ENCODE measurements at regions of chr3 and their contacts with region 1.

Region 1: DNA sequence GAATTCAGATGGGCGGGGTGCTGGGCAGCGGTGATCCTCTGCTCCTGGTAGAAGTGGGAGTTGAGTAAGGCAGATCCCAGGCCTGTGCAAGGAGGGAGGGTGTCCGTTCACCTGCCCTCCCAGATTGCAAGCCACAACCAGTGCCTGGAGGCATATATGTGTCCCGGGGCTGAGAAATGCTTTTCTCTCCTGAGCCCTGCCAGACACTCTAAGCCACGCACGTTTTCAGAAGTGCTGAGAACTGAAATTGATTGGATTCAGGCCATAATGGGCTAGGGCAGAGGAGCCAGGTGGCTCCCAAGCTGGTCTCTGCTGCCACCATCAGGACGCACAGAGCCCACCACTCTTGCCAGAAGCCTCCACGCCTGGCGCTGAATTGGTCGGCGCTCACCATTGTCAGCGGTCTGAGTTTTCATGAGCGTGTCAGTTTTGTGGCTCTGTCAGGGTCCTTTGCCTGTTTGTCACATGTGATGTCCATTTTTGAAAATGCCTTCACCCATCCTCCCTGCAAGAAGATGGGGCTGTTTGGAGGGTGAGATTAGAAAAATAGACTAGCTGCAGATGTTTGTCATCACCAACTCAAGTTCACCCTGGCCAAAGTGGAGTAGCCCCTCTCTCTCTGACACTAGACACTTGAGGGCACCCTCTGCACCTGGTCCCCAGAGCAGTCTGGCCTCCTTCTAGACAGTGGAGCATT is 15.4 kb upstream of the BFSP2 start:
- DNase-seq: peak in 1 of 2 experiments; percentile 55
- H3K4me3 ChIP-seq: no peak overlapping the region
- H3K27ac ChIP-seq: no peak overlapping the region
- H3K4me1 ChIP-seq: peaks cover 8% of the 10 kb centered on the region
- H3K27me3 ChIP-seq: peaks cover 62% of the 10 kb centered on the region
- CTCF ChIP-seq: peak; percentile 60

Region 2: GRCh38 chr3:132253262-132253878 is 1131.1 kb before region 1 on chr3:
- CTCF ChIA-PET with region 1: no interaction called
- POLR2A ChIA-PET with region 1: no interaction called
- intact Hi-C with region 1: loop called (anchors 10 kb)
- DNase-seq: peak; percentile 16 to 56
- H3K4me3 ChIP-seq: no peak overlapping the region
- H3K27ac ChIP-seq: no peak overlapping the region
- H3K4me1 ChIP-seq: peaks cover 34% of the 10 kb centered on the region
- H3K27me3 ChIP-seq: no peaks in the 10 kb centered on the region
- CTCF ChIP-seq: peak; percentile 83

Region 3: DNA sequence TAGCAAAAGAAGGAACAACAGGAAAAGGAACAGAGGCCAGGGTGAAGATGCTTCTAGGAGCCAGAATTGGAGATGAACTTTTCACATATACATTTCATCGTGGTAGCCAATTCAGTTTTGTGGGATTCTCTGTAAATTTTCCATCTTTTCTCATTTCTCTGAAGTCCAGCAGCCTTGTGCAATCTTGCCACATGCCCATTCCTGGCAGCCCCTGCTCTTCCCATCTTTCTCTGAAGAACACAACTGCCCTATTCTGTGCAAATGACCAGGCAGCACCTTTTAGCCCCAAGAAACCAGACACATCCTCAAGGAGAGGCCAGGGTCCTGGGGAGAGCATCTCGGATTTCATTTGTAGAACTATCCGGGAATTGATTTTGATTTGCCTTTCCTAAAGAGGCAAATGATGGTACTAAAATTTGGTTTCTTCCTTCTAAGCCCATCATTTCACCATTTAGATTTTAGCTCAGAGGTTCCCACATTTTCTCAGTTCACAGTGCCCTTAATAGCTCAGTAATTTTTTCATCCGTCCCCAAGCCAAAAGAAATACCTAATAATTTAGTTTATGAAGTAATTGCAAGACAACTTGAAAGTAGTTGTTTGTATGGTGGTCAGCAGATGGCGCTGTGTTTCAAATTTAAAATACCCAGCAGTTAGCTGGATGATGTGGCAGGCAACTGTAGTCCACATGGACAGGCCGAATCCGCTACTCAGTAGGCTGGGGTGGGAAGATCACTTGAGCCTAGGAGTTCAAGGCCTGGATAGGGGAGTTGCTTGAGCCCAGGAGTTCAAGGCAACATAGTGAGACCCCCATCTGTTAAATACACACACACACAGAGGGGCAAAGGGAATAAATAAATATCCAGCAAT is 848.7 kb before region 1 on chr3:
- CTCF ChIA-PET with region 1: no interaction called
- POLR2A ChIA-PET with region 1: no interaction called
- intact Hi-C with region 1: loop called (anchors 5 kb)
- DNase-seq: peak; percentile 36 to 46
- H3K4me3 ChIP-seq: no peak overlapping the region
- H3K27ac ChIP-seq: no peak overlapping the region
- H3K4me1 ChIP-seq: no peaks in the 10 kb centered on the region
- H3K27me3 ChIP-seq: no peaks in the 10 kb centered on the region
- CTCF ChIP-seq: peak; percentile 84

Region 4: DNA sequence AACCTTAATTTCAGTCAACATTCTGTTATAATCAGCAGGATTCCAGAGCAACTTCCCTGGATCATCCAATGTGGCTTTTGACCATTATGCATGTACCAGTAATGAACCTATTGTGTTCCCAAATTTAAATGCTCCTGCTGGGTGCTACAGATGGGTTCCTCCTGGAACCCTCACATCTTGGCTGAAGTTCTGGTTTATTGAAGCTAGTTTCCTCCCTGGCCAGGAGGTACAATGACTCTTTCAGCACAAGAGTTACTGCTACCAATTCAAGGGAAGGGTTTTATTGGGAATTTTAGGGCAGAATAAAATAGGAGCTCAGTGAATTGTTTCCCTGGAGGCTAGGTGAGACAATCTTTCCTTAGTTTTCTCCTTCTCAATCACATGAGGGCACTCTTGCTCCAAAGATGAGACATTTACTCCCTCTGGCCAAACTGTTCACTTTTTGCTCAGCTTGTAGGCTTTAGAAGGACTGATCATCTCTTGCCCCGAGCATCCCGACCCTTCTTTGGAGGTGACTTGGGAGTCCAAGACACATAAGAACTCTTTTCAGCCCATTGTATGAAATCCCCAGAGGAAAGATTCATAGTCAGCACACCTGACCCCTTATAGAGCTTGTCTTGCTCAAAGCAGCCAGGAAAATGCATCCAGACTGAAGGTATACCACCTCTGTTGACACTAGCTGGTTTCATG is 653.4 kb before region 1 on chr3:
- CTCF ChIA-PET with region 1: no interaction called
- POLR2A ChIA-PET with region 1: no interaction called
- intact Hi-C with region 1: loop called (anchors 2 kb)
- DNase-seq: peak in 1 of 2 experiments; percentile 25
- H3K4me3 ChIP-seq: no peak overlapping the region
- H3K27ac ChIP-seq: no peak overlapping the region
- H3K4me1 ChIP-seq: no peaks in the 10 kb centered on the region
- H3K27me3 ChIP-seq: no peaks in the 10 kb centered on the region
- CTCF ChIP-seq: peak; percentile 51; the same call in 1 of the 2 replicates

Region 5: GRCh38 chr3:132972333-132972732 is 412.1 kb before region 1 on chr3:
- CTCF ChIA-PET with region 1: no interaction called
- POLR2A ChIA-PET with region 1: no interaction called
- intact Hi-C with region 1: no loop called
- DNase-seq: no peak
- H3K4me3 ChIP-seq: no peak overlapping the region
- H3K27ac ChIP-seq: no peak overlapping the region
- H3K4me1 ChIP-seq: no peaks in the 10 kb centered on the region
- H3K27me3 ChIP-seq: no peaks in the 10 kb centered on the region
- CTCF ChIP-seq: no peak

Region 6: DNA sequence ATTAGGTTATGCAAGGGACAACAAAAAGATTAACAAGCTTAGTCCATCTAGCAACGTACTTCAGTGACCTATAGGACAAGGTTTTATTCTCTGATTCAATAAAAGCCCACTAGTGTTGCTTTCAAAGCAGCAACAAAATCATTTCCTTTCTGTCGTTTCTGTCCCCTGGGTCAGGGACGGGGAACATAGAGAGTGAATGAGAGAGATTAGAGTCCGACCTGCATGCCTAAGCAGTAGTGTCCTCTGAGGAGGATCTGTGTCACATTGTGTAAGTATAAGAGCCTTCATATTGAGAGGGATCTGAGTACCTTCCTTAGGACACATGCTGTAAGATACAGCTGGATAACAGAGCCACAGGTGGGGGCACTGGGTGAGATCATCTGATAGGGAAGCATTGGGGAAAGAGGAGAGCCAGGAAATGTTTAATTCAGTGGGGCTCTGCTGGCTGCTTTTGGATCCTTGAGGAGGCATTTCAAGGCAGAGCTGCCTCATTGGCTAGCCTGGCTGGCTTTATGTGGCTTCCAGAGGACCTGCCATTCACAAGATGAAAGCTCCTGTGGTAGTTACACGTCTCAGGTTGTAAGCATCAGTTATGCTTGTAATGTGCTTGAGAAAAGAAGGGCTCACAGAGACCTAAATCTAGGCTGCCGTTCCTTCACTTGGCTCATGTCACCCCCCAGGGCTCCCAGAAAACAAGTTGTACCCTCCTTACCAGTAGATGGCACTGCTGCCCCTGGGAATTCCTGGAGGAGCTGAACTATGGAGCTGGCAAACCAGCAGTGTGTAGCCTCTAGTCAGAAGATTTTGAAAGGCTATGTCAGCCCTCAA is 343.6 kb before region 1 on chr3:
- CTCF ChIA-PET with region 1: interaction called, 3 read pairs
- POLR2A ChIA-PET with region 1: no interaction called
- intact Hi-C with region 1: loop called (anchors 1 kb)
- DNase-seq: peak; percentile 36 to 61
- H3K4me3 ChIP-seq: no peak overlapping the region
- H3K27ac ChIP-seq: no peak overlapping the region
- H3K4me1 ChIP-seq: no peaks in the 10 kb centered on the region
- H3K27me3 ChIP-seq: peaks cover 42% of the 10 kb centered on the region
- CTCF ChIP-seq: peak; percentile 74

Region 7: DNA sequence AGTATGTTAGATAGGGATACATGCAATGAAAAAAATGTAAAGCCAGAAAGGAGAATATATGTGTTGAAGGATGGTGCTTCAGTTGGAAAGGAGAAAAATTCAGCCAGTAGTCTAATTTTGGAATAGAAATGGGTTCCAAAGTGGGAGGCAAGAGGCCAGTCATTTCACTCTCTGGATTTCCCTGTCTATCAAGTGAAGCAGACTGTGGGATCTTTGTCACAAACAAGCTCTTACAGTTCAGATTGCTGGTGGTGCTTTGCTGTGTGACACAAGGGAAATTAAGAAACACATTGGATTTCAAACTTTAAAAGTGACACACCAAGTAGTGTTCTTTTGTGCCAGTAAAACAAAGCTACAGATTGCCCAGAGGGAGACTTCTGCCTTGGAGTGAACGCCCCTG is 66.6 kb before region 1 on chr3:
- CTCF ChIA-PET with region 1: no interaction called
- POLR2A ChIA-PET with region 1: no interaction called
- intact Hi-C with region 1: no loop called
- DNase-seq: no peak
- H3K4me3 ChIP-seq: no peak overlapping the region
- H3K27ac ChIP-seq: no peak overlapping the region
- H3K4me1 ChIP-seq: no peaks in the 10 kb centered on the region
- H3K27me3 ChIP-seq: peaks cover 45% of the 10 kb centered on the region
- CTCF ChIP-seq: no peak

Region 8: DNA sequence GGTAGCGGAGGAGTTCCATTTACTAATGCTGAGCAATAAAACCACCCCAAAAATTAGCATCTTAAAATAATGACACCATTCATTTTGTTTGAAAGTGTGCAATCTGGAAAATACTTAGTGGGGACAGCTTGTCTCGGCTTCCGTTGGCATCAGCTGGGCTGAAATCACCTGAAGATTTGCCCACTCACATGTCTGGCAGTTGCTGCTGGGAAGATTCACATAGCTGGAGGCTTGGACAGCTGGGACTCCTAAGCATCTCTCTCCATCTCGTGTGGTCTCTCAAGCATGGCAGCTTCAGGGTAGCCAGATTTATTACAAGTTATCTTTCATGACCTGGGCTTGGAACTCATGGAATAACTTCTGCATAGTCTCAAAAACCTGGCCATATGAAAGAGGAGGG is 23.0 kb before region 1 on chr3:
- CTCF ChIA-PET with region 1: no interaction called
- POLR2A ChIA-PET with region 1: no interaction called
- intact Hi-C with region 1: no loop called
- DNase-seq: no peak
- H3K4me3 ChIP-seq: no peak overlapping the region
- H3K27ac ChIP-seq: no peak overlapping the region
- H3K4me1 ChIP-seq: no peaks in the 10 kb centered on the region
- H3K27me3 ChIP-seq: peaks cover 55% of the 10 kb centered on the region
- CTCF ChIP-seq: no peak

Region 9: GRCh38 chr3:133426721-133427120 is 42.2 kb after region 1 on chr3:
- CTCF ChIA-PET with region 1: no interaction called
- POLR2A ChIA-PET with region 1: no interaction called
- intact Hi-C with region 1: loop called (anchors 2 kb)
- DNase-seq: no peak
- H3K4me3 ChIP-seq: no peak overlapping the region
- H3K27ac ChIP-seq: no peak overlapping the region
- H3K4me1 ChIP-seq: no peaks in the 10 kb centered on the region
- H3K27me3 ChIP-seq: peaks cover 39% of the 10 kb centered on the region
- CTCF ChIP-seq: no peak